ENCODE measurements at regions of chr14 and their contacts with region 1.

Region 1: GRCh38 chr14:54566410-54567223 is at the start of gene SAMD4A:
- DNase-seq: peak; percentile 91
- ATAC-seq: peak; percentile 53
- total RNA-seq, gene SAMD4A: 150 TPM

Region 2: GRCh38 chr14:54691525-54692283 is 125.1 kb after region 1 on chr14:
- intact Hi-C with region 1: loop called (anchors 5 kb)
- DNase-seq: peak; percentile 84
- ATAC-seq: peak; percentile 75

Region 3: GRCh38 chr14:54773171-54773975 is 206.8 kb after region 1 on chr14:
- intact Hi-C with region 1: loop called (anchors 2 kb)
- DNase-seq: peak; percentile 85
- ATAC-seq: peak; percentile 77

Region 4: DNA sequence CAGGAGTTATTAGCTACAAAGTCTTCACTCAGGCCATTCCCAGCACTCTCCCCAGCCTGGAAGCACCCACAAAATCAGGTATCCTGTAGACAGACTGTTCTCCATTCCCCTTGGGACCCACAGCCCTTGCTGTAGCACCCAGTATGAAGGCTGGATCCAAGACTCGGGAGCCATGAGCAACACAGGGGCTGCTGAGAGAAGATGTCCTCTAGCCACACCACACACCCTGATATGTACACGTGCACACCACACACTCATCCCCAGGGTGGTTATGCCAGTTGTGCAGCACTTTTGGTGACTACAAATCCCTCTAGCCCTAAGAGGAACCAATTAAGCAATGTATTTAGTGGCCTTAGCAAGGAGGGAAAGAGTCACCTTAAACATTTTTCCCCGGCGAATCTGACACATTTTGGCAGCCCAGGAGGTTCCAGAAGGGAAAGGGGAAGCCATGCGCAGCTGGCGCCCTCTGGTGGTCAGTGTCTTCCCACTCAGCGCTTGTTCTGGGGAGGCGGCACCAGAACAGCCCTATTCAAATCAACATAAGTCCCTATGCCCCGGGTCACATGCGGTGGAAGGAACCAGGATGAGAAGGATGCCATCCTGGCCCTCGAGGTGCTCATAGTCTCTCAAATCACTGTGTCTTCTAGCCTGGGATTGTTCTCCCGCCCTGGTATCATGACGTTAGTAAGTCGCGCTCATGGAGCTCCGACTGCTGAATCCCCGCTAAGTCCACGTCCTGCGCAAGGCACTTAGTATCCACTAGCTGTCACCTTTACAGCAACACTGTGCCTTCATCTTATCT is 239.1 kb after region 1 on chr14:
- intact Hi-C with region 1: loop called (anchors 10 kb)
- DNase-seq: peak; percentile 90
- ATAC-seq: peak; percentile 96

Measured in left ventricle myocardium superior (tissue), 1 donor.